Stomach (tissue), 19 donors: ENCODE measurements at regions of chr12 and their contacts with region 1.

Region 1: GRCh38 chr12:110093631-110094311 is 30.4 kb upstream of the IFT81 start:
- DNase-seq: no peak
- H3K4me3 ChIP-seq: no peak overlapping the region
- H3K27ac ChIP-seq: no peak overlapping the region
- H3K4me1 ChIP-seq: no peaks in the 10 kb centered on the region
- H3K27me3 ChIP-seq: no peaks in the 10 kb centered on the region
- CTCF ChIP-seq: no peak
- EP300 ChIP-seq: no peak
- POLR2A ChIP-seq: no peak

Region 2: DNA sequence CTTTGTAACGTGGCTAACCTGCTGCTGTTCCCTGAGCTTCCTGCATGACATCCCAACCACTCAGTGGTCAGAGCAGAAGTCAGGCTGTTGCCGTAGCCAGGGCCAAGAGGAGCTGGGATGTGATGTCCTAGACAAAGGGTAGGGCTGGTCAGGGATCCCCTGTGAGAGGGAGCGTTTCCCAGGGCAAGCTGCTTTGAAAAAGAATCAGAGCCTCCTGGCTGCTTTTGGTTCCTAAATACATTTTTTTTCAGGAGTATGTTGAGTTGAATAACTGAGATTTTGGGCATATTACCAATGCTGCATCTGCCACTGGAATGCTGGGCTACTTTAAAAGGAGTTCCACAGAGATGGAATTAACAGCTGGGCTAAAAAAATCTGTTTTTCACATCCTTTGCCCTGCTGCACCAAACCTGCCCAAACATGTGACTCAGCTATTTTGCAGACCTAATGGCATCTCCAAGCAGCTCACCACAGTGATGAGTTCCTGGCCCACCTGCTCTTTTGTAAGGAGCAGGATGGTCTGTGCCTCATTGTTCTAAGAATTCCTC is 70.6 kb before region 1 on chr12:
- intact Hi-C with region 1: no loop called
- DNase-seq: no peak
- H3K4me3 ChIP-seq: no peak overlapping the region
- H3K27ac ChIP-seq: peak overlapping the region in 2 of 5 donors; percentile 31 to 60
- H3K4me1 ChIP-seq: peaks cover 9 to 25% (median 17%) of the 10 kb centered on the region in 4 donors
- H3K27me3 ChIP-seq: no peaks in the 10 kb centered on the region
- CTCF ChIP-seq: no peak
- EP300 ChIP-seq: no peak
- POLR2A ChIP-seq: no peak

Region 3: GRCh38 chr12:110199339-110200123 is 105.8 kb after region 1 on chr12:
- intact Hi-C with region 1: no loop called
- DNase-seq: peak in 1 of 2 donors; percentile 58
- H3K4me3 ChIP-seq: no peak overlapping the region
- H3K27ac ChIP-seq: no peak overlapping the region
- H3K4me1 ChIP-seq: peaks cover 0 to 5% (median 0%) of the 10 kb centered on the region in 4 donors
- H3K27me3 ChIP-seq: no peaks in the 10 kb centered on the region
- CTCF ChIP-seq: no peak
- EP300 ChIP-seq: no peak
- POLR2A ChIP-seq: no peak

Region 4: GRCh38 chr12:110224379-110225304 is 130.9 kb after region 1 on chr12:
- intact Hi-C with region 1: loop called (anchors 10 kb)
- DNase-seq: peak in 1 of 2 donors; percentile 75
- H3K4me3 ChIP-seq: peak overlapping the region in 2 of 4 donors; percentile 11 to 23
- H3K27ac ChIP-seq: peak overlapping the region in 4 of 5 donors; percentile 52 to 78 (median 75)
- H3K4me1 ChIP-seq: peaks cover 10 to 32% (median 18%) of the 10 kb centered on the region in 4 donors
- H3K27me3 ChIP-seq: no peaks in the 10 kb centered on the region
- CTCF ChIP-seq: peak in 5 of 7 experiments; percentile 49 to 58 (median 54)
- EP300 ChIP-seq: no peak
- POLR2A ChIP-seq: no peak

Region 5: GRCh38 chr12:110431957-110432587 is 338.3 kb after region 1 on chr12:
- intact Hi-C with region 1: loop called (anchors 10 kb)
- DNase-seq: no peak
- H3K4me3 ChIP-seq: peak overlapping the region; percentile 46 to 51 (median 49)
- H3K27ac ChIP-seq: peak overlapping the region in 4 of 5 donors; percentile 45 to 77 (median 67)
- H3K4me1 ChIP-seq: peaks cover 0 to 5% (median 2%) of the 10 kb centered on the region in 4 donors
- H3K27me3 ChIP-seq: no peaks in the 10 kb centered on the region
- CTCF ChIP-seq: no peak
- EP300 ChIP-seq: no peak
- POLR2A ChIP-seq: no peak

Region 6: DNA sequence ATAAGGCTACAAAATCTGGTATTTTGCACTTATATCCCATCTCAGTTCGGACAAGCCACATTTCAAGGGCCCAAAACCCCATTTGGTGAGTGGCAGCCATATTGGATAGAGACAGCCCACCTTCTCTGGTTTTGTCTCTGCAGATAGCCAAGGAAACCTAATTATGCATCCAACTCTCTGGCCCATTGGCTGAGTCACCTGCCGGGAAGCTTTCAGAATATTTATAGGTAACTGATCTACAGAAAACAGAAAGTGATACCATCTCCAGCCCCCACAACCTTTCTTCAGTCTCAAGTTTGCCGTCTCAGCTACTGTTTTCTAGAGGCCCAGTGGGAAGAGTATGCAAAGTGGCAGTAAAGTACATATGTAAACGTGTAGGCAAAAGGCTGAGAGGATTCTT is 682.6 kb after region 1 on chr12:
- intact Hi-C with region 1: no loop called
- DNase-seq: no peak
- H3K4me3 ChIP-seq: no peak overlapping the region
- H3K27ac ChIP-seq: no peak overlapping the region
- H3K4me1 ChIP-seq: no peaks in the 10 kb centered on the region
- H3K27me3 ChIP-seq: no peaks in the 10 kb centered on the region
- CTCF ChIP-seq: no peak
- EP300 ChIP-seq: no peak
- POLR2A ChIP-seq: no peak